ENCODE measurements at regions of chr6 and their contacts with region 1.

Region 1: DNA sequence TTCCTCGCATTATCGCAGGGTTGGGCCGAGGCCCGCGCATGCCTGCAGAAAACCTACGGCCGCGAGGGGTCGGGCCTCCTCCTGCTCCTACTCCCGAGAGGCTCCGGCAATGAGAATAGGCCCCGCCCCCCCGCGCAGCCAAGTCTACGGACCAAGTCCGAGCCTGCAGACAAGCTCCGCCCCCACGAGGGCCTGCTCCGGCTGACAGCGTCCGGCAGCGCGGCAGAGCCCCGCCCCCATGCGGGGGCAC is 3.1 kb upstream of the GPSM3 start:
- DNase-seq: peak; percentile 100
- H3K4me3 ChIP-seq: peak overlapping the region in 6 of 7 experiments; percentile 84 to 98 (median 96)
- H3K27ac ChIP-seq: peak overlapping the region; percentile 98 to 99
- H3K4me1 ChIP-seq: peaks cover 16 to 64% (median 61%) of the 10 kb centered on the region in 4 experiments
- H3K27me3 ChIP-seq: no peaks in the 10 kb centered on the region

Region 2: GRCh38 chr6:32070814-32071543 is 124.6 kb before region 1 on chr6:
- CTCF ChIA-PET with region 1: no interaction called
- POLR2A ChIA-PET with region 1: no interaction called
- DNase-seq: no peak
- H3K4me3 ChIP-seq: no peak overlapping the region
- H3K27ac ChIP-seq: no peak overlapping the region
- H3K4me1 ChIP-seq: no peaks in the 10 kb centered on the region
- H3K27me3 ChIP-seq: peaks cover 0 to 2% (median 0%) of the 10 kb centered on the region in 5 experiments

Region 3: DNA sequence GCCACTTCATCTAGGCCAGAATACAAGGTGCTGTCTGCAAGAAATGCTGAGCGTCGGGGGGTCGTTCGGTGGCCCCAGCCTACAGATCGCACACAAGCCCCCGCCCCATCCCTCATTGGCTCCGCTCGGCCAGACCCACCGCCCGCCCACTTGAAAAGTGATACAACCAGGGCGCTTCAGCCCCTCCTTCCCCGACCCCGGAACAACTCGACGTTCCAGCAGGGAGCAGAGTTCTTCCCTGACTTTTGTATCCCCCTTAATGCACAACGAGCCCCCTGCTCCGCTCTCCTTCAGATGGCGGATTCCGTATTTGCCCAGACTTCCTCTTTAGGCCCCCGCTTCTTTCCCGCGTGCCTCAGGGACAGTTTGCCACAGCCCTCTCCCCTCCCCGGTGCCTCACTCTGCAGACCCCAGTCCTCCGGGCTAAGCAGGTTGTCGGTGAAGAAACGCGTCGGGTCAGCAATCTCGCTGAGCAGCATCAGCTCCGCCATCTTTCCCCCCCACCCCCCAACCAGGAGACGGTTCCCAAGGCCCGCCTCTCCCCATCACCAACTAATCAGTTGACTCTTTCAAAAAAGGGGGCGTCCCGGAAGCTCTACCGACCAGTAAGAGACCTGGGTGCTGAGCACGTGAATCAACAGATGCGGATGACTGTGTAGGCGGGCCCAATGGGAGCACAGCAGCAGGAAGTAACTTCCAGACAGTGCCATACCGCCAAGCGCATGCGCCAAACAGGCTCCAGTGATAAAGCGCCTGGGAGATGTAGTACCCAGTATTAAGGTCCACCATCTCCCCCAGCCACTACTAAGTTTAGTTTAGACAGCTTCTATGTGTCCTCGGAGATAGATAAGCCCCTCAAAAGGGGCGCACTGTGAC is 67.6 kb before region 1 on chr6 and contains the start of gene ATF6B:
- CTCF ChIA-PET with region 1: interaction called, 10 read pairs
- POLR2A ChIA-PET with region 1: interaction called, 6 read pairs
- DNase-seq: peak; percentile 100
- H3K4me3 ChIP-seq: peak within 1 kb of the TSS; percentile 92 to 99 (median 97)
- H3K27ac ChIP-seq: peak within 1 kb of the TSS; percentile 87 to 96
- H3K4me1 ChIP-seq: peaks cover 1 to 30% (median 26%) of the 10 kb centered on the region in 4 experiments
- H3K27me3 ChIP-seq: no peaks in the 10 kb centered on the region

Region 4: DNA sequence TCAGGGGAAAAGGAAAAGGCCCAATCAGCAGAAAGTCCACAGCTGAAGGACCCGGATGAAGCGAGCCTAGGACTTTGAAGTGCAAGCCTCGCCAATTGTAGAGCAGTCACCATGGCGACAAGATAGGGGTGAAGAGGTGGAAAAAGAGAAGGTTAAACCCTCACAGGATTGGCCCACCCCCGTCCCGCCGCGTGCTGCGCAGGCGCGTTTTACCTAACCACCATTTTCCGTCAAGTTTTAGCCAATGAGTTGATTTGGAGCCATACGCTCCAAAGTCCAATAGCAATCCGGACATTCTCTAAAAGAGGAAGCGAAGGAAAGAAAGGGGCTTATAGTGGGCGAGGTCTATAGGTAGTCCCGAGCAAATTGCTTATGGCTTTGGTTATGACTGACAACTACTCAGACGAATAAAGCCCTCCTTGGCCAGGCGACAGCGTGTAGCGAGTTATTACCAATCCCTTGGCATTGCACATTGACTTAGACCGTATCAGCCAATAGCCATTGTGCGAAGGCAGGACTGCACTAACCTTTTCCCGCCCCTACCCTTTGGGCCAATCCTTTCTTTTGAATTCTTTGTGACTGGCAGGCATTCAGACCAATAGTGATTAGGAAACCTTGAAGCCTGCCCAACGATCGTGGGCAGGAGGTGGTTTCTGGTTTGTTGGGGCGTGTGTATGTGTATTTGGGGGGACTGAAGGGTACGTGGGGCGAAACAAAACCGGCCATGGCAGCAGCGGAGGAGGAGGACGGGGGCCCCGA is 17.6 kb before region 1 on chr6 and contains the start of gene RNF5:
- CTCF ChIA-PET with region 1: interaction called, 13 read pairs
- POLR2A ChIA-PET with region 1: interaction called, 6 read pairs
- DNase-seq: peak; percentile 100
- H3K4me3 ChIP-seq: peak within 1 kb of the TSS; percentile 70 to 94 (median 90)
- H3K27ac ChIP-seq: peak within 1 kb of the TSS; percentile 93 to 95
- H3K4me1 ChIP-seq: peaks cover 21 to 63% (median 48%) of the 10 kb centered on the region in 4 experiments
- H3K27me3 ChIP-seq: no peaks in the 10 kb centered on the region

Measured in common myeloid progenitor, CD34-positive (primary cell).